Ovary (tissue), 10 donors: ENCODE measurements at regions of chr2 and their contacts with region 1.

Region 1: GRCh38 chr2:46983065-46983801 is 67.6 kb upstream of the MCFD2 start:
- DNase-seq: no peak
- H3K4me3 ChIP-seq: no peak overlapping the region
- H3K27ac ChIP-seq: peak overlapping the region in 1 of 2 donors; percentile 43
- H3K4me1 ChIP-seq: peaks cover 28% of the 10 kb centered on the region
- H3K27me3 ChIP-seq: no peaks in the 10 kb centered on the region
- CTCF ChIP-seq: no peak
- EP300 ChIP-seq: no peak
- POLR2A ChIP-seq: no peak

Region 2: GRCh38 chr2:47323009-47323821 is 340.0 kb after region 1 on chr2:
- intact Hi-C with region 1: loop called in 1 of 4 experiments (anchors 2 kb)
- DNase-seq: peak; percentile 67 to 85 (median 78)
- H3K4me3 ChIP-seq: no peak overlapping the region
- H3K27ac ChIP-seq: no peak overlapping the region
- H3K4me1 ChIP-seq: peaks cover 4% of the 10 kb centered on the region
- H3K27me3 ChIP-seq: no peaks in the 10 kb centered on the region
- CTCF ChIP-seq: peak; percentile 77 to 96 (median 96)
- EP300 ChIP-seq: no peak
- POLR2A ChIP-seq: peak; percentile 39